ENCODE measurements at regions of chr4 and their contacts with region 1.

Region 1: DNA sequence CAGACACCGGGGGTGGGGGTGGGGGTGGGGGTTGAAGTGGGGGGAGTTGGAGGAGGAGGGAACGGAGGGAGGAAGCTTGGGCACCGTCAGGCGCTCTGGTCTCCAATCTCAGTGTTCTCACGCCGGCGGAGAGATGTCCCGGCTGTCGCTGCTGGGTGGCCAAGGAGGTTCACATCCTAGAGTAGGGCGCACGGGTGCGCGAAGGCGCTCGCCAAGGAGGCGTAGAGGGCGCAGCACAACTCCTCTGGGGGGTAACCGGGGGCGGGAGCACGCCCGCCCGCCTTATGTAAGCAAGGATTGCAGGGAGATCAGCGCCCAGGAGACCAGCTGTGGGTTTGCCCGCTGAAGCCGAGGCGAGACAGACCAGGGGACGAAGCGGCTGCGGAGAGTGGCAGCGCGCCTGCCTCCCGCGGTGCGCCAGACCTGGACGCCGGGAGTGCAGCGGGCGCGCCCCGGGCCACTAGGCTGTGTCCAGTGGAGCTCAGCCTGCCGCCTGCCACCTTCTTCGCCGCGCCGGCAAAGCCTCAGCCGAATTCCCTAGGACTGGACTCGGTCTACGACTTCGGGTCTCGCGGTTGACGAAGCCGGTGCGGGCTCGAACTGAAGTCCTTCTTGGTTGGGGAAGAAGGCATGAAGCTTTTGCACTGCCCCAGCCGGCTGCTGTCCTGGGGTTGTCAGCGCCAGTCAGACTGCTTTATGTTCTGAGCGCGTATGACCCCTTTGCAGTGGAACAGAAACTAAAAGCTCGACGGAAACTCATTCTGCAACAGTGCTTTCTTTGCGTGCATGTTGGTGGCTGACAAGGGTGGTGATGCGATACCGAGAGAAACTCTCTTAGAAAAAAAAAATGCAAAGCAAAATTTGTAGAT is 707 bp upstream of the UNC5C start:
- DNase-seq: peak in 1 of 2 donors; percentile 80
- H3K4me3 ChIP-seq: peak overlapping the region; percentile 74 to 98
- H3K27ac ChIP-seq: peak overlapping the region; percentile 93 to 96
- H3K4me1 ChIP-seq: no peaks in the 10 kb centered on the region
- H3K27me3 ChIP-seq: no peaks in the 10 kb centered on the region
- CTCF ChIP-seq: no peak

Region 2: DNA sequence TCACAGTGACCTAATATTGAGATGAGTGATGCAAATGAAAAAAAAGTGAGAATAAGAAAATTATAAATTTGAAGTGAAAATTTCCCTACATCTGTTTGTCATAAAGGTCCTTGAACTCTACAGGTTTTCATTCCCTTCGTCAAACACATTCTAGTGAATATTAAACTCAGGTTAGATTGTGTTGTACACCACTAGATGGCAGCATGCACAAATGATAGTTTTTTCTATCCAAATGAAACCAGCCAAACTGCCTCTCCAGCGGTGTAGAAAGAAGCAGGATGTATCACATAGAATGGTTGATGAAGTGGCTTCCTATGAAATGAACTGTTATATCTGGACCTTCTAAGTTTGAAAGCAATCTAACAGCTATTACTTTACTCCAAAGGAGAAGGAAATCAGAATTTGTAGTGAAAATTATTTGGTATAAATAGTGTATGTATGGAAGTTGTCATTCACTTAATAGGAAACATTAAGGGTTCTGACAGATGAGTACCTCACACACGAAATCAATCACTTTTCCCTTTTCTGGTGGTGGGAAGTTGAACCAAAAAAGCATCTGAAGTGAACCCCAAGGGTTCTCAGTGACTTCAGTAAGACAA is 383.5 kb before region 1 on chr4:
- intact Hi-C with region 1: loop called (anchors 5 kb)
- DNase-seq: no peak
- H3K4me3 ChIP-seq: no peak overlapping the region
- H3K27ac ChIP-seq: no peak overlapping the region
- H3K4me1 ChIP-seq: no peaks in the 10 kb centered on the region
- H3K27me3 ChIP-seq: no peaks in the 10 kb centered on the region
- CTCF ChIP-seq: peak; percentile 53 to 63 (median 54)

Region 3: GRCh38 chr4:95510145-95510544 is 39.3 kb before region 1 on chr4:
- intact Hi-C with region 1: loop called (anchors 5 kb)
- DNase-seq: no peak
- H3K4me3 ChIP-seq: no peak overlapping the region
- H3K27ac ChIP-seq: no peak overlapping the region
- H3K4me1 ChIP-seq: peaks cover 0 to 3% of the 10 kb centered on the region in 2 donors
- H3K27me3 ChIP-seq: no peaks in the 10 kb centered on the region
- CTCF ChIP-seq: peak in 2 of 3 experiments; percentile 43 to 56

Region 4: GRCh38 chr4:95532305-95532704 is 17.2 kb before region 1 on chr4:
- intact Hi-C with region 1: loop called (anchors 2 kb)
- DNase-seq: no peak
- H3K4me3 ChIP-seq: no peak overlapping the region
- H3K27ac ChIP-seq: peak overlapping the region in 1 of 2 donors; percentile 50
- H3K4me1 ChIP-seq: no peaks in the 10 kb centered on the region
- H3K27me3 ChIP-seq: no peaks in the 10 kb centered on the region
- CTCF ChIP-seq: no peak

Region 5: GRCh38 chr4:95619525-95620443 is 70.3 kb after region 1 on chr4:
- intact Hi-C with region 1: loop called (anchors 5 kb)
- DNase-seq: no peak
- H3K4me3 ChIP-seq: no peak overlapping the region
- H3K27ac ChIP-seq: peak overlapping the region; percentile 42 to 55
- H3K4me1 ChIP-seq: peaks cover 0 to 8% of the 10 kb centered on the region in 2 donors
- H3K27me3 ChIP-seq: no peaks in the 10 kb centered on the region
- CTCF ChIP-seq: no peak